Activated naive CD4-positive, alpha-beta T cell treated with anti-CD3 and anti-CD28 coated beads for 36 hours (primary cell): ENCODE measurements at regions of chr16 and their contacts with region 1.

Region 1: DNA sequence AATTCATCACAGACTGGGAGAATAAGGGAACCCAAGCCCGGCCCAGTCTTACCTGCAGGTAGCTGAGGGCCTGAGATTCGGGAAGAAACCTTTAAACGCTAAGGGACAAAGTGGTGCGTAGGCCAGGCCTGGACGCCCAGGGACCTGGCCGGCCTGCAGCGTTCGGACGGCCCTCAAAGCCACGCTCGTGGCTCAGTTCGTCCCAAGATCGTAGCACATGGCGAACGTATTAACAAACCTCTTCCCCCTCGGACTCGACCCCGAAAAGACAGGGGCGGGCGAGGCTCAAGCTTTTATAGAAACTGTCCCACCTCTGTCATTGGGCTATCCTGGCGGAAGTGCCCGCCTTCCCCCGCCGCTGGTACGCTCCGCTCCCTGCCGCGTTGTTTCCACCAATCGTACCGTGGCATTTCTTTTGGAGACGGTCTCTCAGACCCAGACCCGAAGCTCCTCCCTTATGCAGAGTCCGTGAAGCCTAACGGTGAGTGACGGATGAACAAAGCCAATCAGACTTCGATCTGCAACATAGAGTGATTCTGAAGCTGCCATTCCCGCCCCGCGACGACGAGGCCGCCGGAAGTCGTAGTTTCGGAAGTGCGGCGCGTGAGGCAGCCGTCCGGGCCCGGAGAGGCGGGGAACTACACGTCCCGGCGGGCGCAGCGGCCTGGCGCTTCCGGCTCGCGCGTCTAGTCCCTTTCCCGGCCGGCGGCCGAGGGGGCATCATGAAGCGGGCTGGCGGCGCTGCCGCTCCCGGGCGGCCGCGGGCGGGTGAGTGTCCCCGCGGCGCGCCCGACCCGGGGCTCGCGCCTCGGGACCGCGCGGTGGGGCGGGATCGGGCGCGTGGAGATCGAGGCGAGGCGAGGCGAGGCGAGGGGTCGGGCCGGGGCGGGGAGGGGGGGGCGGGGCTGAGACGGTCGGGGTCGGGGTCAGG is at the start of gene TRAF7:
- DNase-seq: peak; percentile 99
- H3K4me3 Mint-ChIP-seq: peak within 1 kb of the TSS; percentile 97
- H3K27ac Mint-ChIP-seq: peak within 1 kb of the TSS; percentile 91
- H3K4me1 Mint-ChIP-seq: peaks cover 41% of the 10 kb centered on the region
- H3K27me3 Mint-ChIP-seq: no peaks in the 10 kb centered on the region
- total RNA-seq, gene TRAF7: 102 to 104 TPM

Region 2: DNA sequence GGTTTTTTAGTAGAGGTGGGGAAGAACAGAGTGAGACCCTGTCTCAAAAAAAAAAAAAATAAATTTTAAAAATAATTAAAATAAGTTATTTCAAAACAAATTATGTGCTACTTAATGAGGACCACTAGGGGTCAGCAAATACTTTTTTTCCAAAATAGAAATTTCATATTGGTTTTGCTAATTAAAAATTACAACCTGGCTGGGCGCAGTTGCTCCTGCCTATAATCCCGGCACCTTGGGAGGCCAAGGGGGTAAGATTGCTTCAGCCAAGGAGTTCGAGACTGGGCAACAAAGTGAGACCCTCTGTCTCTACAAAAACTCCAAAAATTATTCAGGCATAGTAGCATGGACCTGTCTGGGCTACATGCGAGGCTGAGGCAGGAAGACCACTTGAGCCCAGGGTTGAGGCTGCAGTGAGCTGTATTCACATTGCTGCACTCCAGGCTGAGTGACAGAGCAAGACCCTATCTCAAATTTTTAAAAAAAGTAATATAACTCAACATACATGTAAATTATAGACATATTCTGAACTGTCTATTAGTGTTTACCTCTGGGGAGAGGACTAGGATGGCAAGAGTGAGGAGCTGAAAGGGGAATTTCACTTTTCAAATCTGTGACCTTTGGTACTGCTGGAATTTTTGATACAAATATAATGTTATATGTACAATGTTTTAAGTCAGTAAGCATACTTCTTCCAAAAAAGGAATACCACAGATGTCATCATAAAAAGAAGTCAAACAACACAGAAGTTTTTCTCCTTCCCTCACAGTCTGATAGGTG is 291.5 kb before region 1 on chr16:
- CTCF ChIA-PET with region 1: no interaction called
- intact Hi-C with region 1: loop called (anchors 10 kb)
- DNase-seq: no peak
- H3K4me3 Mint-ChIP-seq: no peak overlapping the region
- H3K27ac Mint-ChIP-seq: no peak overlapping the region
- H3K4me1 Mint-ChIP-seq: no peaks in the 10 kb centered on the region
- H3K27me3 Mint-ChIP-seq: no peaks in the 10 kb centered on the region

Region 3: DNA sequence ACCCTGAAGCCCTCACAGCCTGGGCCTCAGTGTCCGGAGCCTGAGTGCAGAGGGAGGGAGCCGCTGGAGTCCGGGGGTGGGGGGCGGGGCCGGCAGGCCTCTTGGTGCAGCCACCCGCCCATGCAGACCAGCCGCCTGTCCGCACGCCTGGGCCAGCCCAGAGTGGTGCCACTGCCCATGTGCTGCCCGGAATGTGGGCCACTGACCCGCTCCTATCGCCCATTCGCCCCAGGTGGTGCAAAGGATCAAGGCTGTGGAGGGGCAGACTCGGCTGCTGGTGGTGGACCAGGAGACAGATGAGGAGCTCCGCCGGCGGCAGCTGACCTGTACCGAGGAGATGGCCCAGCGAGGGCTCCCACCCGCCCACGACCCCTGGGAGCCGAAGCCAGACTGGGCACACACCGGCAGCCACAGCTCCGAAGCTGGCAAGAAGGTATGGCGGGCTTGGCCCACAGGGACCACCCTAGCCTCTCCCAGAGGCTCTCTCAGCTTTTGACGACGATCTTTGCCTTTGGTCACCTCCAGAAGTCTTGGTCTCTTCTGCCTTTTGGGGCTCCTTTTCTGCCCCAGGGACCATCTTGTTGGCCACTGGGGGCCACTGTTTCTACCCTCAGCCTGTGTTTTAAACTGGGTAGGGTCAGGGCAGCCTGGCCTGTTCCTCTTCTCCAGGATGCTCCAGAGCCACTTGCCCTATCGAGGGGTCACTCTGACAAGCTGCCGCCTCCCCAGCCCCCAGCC is 125.8 kb before region 1 on chr16:
- CTCF ChIA-PET with region 1: no interaction called
- intact Hi-C with region 1: no loop called
- DNase-seq: no peak
- H3K4me3 Mint-ChIP-seq: no peak overlapping the region
- H3K27ac Mint-ChIP-seq: no peak overlapping the region
- H3K4me1 Mint-ChIP-seq: peaks cover 10% of the 10 kb centered on the region
- H3K27me3 Mint-ChIP-seq: peaks cover 4% of the 10 kb centered on the region

Region 4: DNA sequence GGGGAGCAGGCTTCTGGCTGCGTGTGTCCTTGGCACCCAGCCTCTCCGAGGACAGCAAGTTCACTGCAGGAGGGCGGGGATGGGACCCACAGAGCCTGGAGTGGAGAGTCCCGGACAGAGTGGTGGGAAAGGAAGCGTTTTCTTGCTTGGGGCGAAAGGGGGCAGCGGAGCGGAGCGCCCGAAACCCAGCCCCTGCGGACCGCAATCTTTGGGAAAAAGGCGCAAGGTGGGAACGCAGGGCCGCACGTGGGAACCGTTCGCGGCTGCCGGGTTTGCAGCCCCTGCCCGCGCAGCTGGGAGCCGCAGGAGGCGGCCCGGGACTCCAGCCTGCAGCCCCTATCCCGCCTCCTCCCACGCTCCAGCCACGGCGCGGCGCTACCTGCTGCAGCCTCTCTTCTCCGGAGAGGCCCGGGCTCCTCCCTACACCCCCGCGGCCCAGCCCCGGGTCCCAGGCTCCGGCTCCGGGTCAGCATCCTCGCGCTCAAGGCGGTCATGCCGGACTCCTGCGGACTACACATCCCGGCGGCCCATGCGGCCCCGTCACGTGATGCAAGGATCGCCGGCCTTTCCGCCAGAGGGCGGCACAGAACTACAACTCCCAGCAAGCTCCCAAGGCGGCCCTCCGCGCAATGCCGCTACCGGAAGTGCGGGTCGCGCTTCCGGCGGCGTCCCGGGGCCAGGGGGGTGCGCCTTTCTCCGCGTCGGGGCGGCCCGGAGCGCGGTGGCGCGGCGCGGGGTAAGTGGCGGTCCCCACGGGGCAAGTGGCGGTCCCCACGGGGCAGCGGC is 107.8 kb before region 1 on chr16 and contains the starts of genes NTHL1 and TSC2:
- CTCF ChIA-PET with region 1: no interaction called
- intact Hi-C with region 1: loop called (anchors 1 kb)
- DNase-seq: peak; percentile 95
- H3K4me3 Mint-ChIP-seq: peak within 1 kb of the TSS; percentile 93
- H3K27ac Mint-ChIP-seq: peak within 1 kb of the TSS; percentile 61
- H3K4me1 Mint-ChIP-seq: peaks cover 16% of the 10 kb centered on the region
- H3K27me3 Mint-ChIP-seq: no peaks in the 10 kb centered on the region
- total RNA-seq, gene NTHL1: 20.1 to 24.1 TPM
- total RNA-seq, gene TSC2: 72.3 to 72.7 TPM

Region 5: DNA sequence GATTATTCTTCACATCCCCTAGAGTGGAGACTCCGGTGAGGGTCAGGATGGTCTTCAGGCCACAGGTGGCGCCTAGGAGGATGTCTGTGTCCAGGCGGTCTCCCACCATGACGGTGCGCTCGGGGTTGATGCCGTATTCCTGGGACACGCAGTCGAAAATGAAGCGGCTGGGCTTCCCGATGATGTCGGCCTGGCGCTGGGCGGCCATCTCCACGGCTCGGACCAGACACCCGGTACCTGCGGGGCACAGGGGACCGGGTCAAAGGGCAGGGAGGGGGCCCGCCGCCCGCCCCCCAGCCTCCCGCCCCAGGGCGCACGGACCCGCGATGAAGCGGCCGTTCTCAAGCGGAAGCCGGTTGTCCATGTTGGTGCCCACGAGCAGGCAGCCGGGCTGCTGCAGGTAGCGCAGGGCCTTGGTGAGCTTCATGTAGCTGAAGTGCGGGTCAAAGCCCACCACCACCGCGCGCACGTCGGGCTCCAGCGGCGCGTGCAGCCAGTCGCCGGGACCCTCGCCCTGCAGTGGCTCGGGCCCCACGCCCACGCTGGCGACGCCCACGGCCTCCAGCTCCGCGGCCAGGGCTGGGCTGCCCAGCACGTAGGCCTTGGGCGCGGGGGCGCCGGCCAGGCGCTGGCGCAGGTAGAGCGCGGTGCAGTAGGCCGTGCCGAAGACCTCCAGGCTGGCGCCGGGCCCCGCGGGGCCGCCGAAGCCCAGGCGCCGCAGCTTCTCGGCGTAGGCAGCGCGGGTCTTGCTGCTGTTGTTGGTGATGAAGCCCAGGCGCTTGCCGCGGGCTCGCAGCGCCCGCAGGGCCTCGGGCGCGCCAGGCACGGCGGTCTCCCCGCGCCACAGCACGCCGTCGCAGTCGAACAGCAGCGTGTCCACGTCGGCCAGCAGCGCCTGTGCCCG is 58.7 kb after region 1 on chr16:
- CTCF ChIA-PET with region 1: no interaction called
- intact Hi-C with region 1: loop called (anchors 2 kb)
- DNase-seq: no peak
- H3K4me3 Mint-ChIP-seq: peak overlapping the region; percentile 73
- H3K27ac Mint-ChIP-seq: no peak overlapping the region
- H3K4me1 Mint-ChIP-seq: peaks cover 22% of the 10 kb centered on the region
- H3K27me3 Mint-ChIP-seq: no peaks in the 10 kb centered on the region

Region 6: GRCh38 chr16:2267913-2268666 is 112.7 kb after region 1 on chr16 and contains the start of gene RNPS1:
- CTCF ChIA-PET with region 1: no interaction called
- intact Hi-C with region 1: loop called (anchors 1 kb)
- DNase-seq: peak; percentile 96
- H3K4me3 Mint-ChIP-seq: peak within 1 kb of the TSS; percentile 94
- H3K27ac Mint-ChIP-seq: peak within 1 kb of the TSS; percentile 97
- H3K4me1 Mint-ChIP-seq: peaks cover 38% of the 10 kb centered on the region
- H3K27me3 Mint-ChIP-seq: no peaks in the 10 kb centered on the region
- total RNA-seq, gene RNPS1: 306 to 311 TPM

Region 7: GRCh38 chr16:2752035-2752849 is 596.9 kb after region 1 on chr16 and contains the start of gene SRRM2:
- CTCF ChIA-PET with region 1: no interaction called
- intact Hi-C with region 1: loop called (anchors 2 kb)
- DNase-seq: peak; percentile 97
- H3K4me3 Mint-ChIP-seq: peak within 1 kb of the TSS; percentile 87
- H3K27ac Mint-ChIP-seq: peak within 1 kb of the TSS; percentile 99
- H3K4me1 Mint-ChIP-seq: peaks cover 42% of the 10 kb centered on the region
- H3K27me3 Mint-ChIP-seq: no peaks in the 10 kb centered on the region
- total RNA-seq, gene SRRM2: 607 to 649 TPM